B cell (primary cell): ENCODE measurements at regions of chr11 and their contacts with region 1.

Region 1: GRCh38 chr11:47932544-47932943 is 47.8 kb upstream of the PTPRJ start:
- DNase-seq: no peak
- ATAC-seq: no peak
- H3K4me3 ChIP-seq: no peak overlapping the region
- H3K4me3 Mint-ChIP-seq: no peak overlapping the region
- H3K27ac ChIP-seq: peak overlapping the region in 1 of 2 donors; percentile 4
- H3K27ac Mint-ChIP-seq: no peak overlapping the region
- H3K4me1 ChIP-seq: peaks cover 27 to 37% of the 10 kb centered on the region in 2 donors
- H3K4me1 Mint-ChIP-seq: peaks cover 40% of the 10 kb centered on the region
- H3K27me3 ChIP-seq: no peaks in the 10 kb centered on the region
- H3K27me3 Mint-ChIP-seq: no peaks in the 10 kb centered on the region
- CTCF ChIP-seq: no peak

Region 2: DNA sequence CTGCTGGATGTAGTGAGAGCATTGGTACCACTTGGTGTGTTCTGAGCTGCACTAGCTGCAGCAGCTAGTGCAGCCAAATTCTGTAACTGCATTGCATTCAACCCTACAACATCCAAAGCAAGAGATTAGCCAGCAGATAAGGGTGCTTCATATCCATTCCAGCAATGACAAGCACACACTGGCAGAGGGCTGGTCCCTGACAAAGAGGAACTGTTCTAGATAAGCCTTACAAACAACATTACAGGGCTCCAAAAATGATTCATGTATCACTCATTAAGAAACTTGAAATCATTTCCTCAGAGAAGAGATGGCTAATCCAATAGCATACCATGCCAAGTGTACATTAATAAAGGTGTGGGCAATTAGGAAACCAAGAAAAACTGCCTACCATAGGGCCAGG is 455.2 kb before region 1 on chr11:
- CTCF ChIA-PET with region 1: no interaction called
- POLR2A ChIA-PET with region 1: no interaction called
- intact Hi-C with region 1: no loop called
- DNase-seq: no peak
- ATAC-seq: no peak
- H3K4me3 ChIP-seq: no peak overlapping the region
- H3K4me3 Mint-ChIP-seq: no peak overlapping the region
- H3K27ac ChIP-seq: no peak overlapping the region
- H3K27ac Mint-ChIP-seq: peak overlapping the region; percentile 39
- H3K4me1 ChIP-seq: no peaks in the 10 kb centered on the region
- H3K4me1 Mint-ChIP-seq: no peaks in the 10 kb centered on the region
- H3K27me3 ChIP-seq: no peaks in the 10 kb centered on the region
- H3K27me3 Mint-ChIP-seq: no peaks in the 10 kb centered on the region
- CTCF ChIP-seq: no peak

Region 3: DNA sequence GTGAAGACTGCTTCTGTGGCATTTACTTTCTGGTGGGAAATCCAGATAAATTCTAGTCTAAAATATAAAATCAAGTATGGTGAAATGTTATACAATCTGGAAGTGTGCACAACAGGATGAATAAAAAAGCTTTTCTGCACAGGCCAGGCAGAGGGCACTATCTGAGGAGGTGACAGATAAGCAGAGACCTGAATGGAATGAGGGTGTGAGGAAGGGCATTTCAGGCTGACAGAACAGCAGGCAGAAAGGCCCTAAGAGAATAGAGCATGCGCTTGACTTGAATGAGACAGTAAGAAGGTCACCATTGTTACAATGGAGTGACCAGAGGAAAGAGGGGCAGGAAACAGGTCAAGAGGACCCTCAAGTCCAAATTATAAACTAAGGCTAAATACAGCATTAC is 131.8 kb before region 1 on chr11:
- CTCF ChIA-PET with region 1: no interaction called
- POLR2A ChIA-PET with region 1: no interaction called
- intact Hi-C with region 1: no loop called
- DNase-seq: no peak
- ATAC-seq: no peak
- H3K4me3 ChIP-seq: no peak overlapping the region
- H3K4me3 Mint-ChIP-seq: no peak overlapping the region
- H3K27ac ChIP-seq: no peak overlapping the region
- H3K27ac Mint-ChIP-seq: no peak overlapping the region
- H3K4me1 ChIP-seq: no peaks in the 10 kb centered on the region
- H3K4me1 Mint-ChIP-seq: no peaks in the 10 kb centered on the region
- H3K27me3 ChIP-seq: no peaks in the 10 kb centered on the region
- H3K27me3 Mint-ChIP-seq: no peaks in the 10 kb centered on the region
- CTCF ChIP-seq: no peak

Region 4: DNA sequence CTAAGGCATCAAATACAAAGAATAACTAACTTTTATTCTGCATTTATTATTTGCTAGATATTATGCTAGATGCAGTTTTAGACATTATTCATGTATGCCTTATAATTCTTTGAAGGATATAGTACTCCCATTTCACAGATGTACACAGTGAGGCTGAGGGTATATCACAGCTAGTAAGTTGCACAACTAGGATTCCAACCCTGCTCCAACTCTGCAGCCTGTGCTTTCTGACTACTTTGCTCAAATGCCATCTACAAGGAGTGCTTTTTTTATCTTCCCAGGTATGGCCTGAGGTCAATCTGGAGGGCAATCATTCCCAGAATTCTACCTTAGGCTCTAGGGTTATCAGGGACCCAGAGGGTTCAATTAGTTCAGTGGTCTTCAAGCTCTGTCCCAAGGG is 112.8 kb before region 1 on chr11:
- CTCF ChIA-PET with region 1: no interaction called
- POLR2A ChIA-PET with region 1: no interaction called
- intact Hi-C with region 1: no loop called
- DNase-seq: no peak
- ATAC-seq: no peak
- H3K4me3 ChIP-seq: no peak overlapping the region
- H3K4me3 Mint-ChIP-seq: no peak overlapping the region
- H3K27ac ChIP-seq: no peak overlapping the region
- H3K27ac Mint-ChIP-seq: peak overlapping the region; percentile 15
- H3K4me1 ChIP-seq: peaks cover 4 to 5% of the 10 kb centered on the region in 2 donors
- H3K4me1 Mint-ChIP-seq: peaks cover 6% of the 10 kb centered on the region
- H3K27me3 ChIP-seq: no peaks in the 10 kb centered on the region
- H3K27me3 Mint-ChIP-seq: no peaks in the 10 kb centered on the region
- CTCF ChIP-seq: no peak

Region 5: DNA sequence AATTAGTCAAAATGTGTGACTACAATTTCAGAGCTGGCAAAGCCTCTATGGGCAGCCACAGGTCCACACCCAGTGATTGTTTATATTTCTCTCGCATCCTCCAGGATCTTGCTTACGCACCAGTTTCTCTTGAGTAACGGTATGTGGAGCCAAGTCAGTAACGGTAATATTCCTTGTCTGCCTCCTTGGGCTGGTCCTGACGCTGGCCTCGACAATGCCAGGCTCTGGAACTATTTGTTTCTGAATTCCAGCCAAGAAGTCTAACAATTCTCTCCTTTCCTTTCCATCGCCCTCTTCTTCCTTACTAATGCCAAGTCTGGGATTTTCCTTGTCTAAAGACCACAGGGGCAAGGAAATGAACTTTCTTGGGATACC is 74.4 kb before region 1 on chr11:
- CTCF ChIA-PET with region 1: interaction called, 56 read pairs
- POLR2A ChIA-PET with region 1: interaction called, 3 read pairs
- intact Hi-C with region 1: no loop called
- DNase-seq: no peak
- ATAC-seq: no peak
- H3K4me3 ChIP-seq: peak overlapping the region in 1 of 5 experiments; percentile 54
- H3K4me3 Mint-ChIP-seq: peak overlapping the region; percentile 63
- H3K27ac ChIP-seq: peak overlapping the region; percentile 80 to 84
- H3K27ac Mint-ChIP-seq: peak overlapping the region; percentile 86
- H3K4me1 ChIP-seq: peaks cover 98 to 99% of the 10 kb centered on the region in 2 donors
- H3K4me1 Mint-ChIP-seq: peaks cover 64% of the 10 kb centered on the region
- H3K27me3 ChIP-seq: no peaks in the 10 kb centered on the region
- H3K27me3 Mint-ChIP-seq: no peaks in the 10 kb centered on the region
- CTCF ChIP-seq: no peak

Region 6: DNA sequence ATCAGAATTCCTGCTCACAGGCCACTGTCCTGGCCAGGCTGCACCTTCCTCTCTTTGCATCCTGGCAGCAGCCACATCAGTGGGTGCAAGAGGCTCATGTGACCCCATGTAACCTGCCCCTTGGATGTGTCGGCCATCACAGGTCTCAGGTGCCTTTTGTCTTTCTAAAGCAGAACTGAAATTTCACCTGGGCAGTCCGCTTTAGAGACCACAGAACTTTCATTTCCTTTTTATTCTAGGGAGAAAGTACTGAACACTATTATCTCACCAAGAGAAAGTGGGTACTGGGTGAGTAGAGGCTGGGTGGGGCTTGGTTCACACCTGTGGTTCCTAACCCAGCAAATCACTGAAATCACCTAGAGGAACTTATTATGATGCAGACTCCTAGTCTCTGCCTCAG is 32.7 kb before region 1 on chr11:
- CTCF ChIA-PET with region 1: interaction called, 16 read pairs
- POLR2A ChIA-PET with region 1: interaction called, 3 read pairs
- intact Hi-C with region 1: loop called (anchors 5 kb)
- DNase-seq: peak; percentile 91
- ATAC-seq: peak; percentile 93
- H3K4me3 ChIP-seq: no peak overlapping the region
- H3K4me3 Mint-ChIP-seq: peak overlapping the region; percentile 61
- H3K27ac ChIP-seq: peak overlapping the region; percentile 76 to 88
- H3K27ac Mint-ChIP-seq: peak overlapping the region; percentile 96
- H3K4me1 ChIP-seq: peaks cover 33 to 38% of the 10 kb centered on the region in 2 donors
- H3K4me1 Mint-ChIP-seq: peaks cover 38% of the 10 kb centered on the region
- H3K27me3 ChIP-seq: no peaks in the 10 kb centered on the region
- H3K27me3 Mint-ChIP-seq: no peaks in the 10 kb centered on the region
- CTCF ChIP-seq: no peak

Region 7: DNA sequence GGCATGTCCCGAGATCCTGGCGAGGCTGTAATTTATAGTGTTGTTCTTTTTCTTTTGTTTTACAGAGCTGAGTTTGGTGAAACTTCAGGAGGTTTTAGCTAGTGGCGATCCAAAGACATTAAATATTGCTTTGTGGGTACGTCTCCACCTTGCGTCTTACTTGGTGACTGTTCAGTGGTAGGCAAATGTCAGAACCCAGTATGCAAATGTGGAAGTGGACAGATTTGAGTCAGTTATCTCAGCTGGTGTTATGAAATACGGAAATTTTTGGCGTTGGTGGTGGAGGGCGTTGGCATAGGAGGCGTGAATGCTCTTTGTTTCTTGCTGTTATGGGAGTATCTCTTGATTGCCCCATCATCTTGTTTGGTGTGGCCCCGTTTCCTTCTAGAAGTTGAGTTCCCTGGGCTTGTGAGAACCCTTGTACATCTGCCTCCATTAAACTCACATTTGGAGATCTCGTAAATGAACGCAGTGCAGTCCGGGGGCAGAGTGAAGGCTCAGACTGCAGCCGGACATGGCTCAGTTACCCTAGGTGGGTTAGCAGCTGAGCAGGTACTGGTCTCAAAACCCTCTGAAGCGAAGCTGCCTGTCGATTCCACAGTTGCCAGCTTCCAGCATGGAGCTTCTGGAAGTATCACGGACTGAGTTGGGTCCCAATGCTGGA is 87.7 kb after region 1 on chr11:
- CTCF ChIA-PET with region 1: interaction called, 18 read pairs
- POLR2A ChIA-PET with region 1: interaction called, 3 read pairs
- intact Hi-C with region 1: loop called (anchors 1 kb)
- DNase-seq: peak; percentile 75
- ATAC-seq: peak; percentile 79
- H3K4me3 ChIP-seq: peak overlapping the region in 2 of 5 experiments; percentile 32 to 55
- H3K4me3 Mint-ChIP-seq: peak overlapping the region; percentile 54
- H3K27ac ChIP-seq: peak overlapping the region; percentile 53 to 55
- H3K27ac Mint-ChIP-seq: peak overlapping the region; percentile 32
- H3K4me1 ChIP-seq: peaks cover 62 to 87% of the 10 kb centered on the region in 2 donors
- H3K4me1 Mint-ChIP-seq: peaks cover 79% of the 10 kb centered on the region
- H3K27me3 ChIP-seq: no peaks in the 10 kb centered on the region
- H3K27me3 Mint-ChIP-seq: no peaks in the 10 kb centered on the region
- CTCF ChIP-seq: peak; percentile 26